ENCODE measurements at regions of chr17 and their contacts with region 1.

Region 1: GRCh38 chr17:75205037-75205792 is at the start of gene NUP85:
- DNase-seq: peak; percentile 99 to 100
- ATAC-seq: peak; percentile 92 to 94
- H3K4me3 ChIP-seq: peak within 1 kb of the TSS; percentile 87
- H3K27ac ChIP-seq: peak within 1 kb of the TSS; percentile 94 to 96
- H3K4me1 ChIP-seq: peaks cover 19% of the 10 kb centered on the region; the same call in 2 of the 3 replicates
- CTCF ChIP-seq: no peak
- EP300 ChIP-seq: no peak; a peak in 1 of 5 replicates
- POLR2A ChIP-seq: peak; percentile 96
- RAD21 ChIP-seq: no peak
- polyA plus RNA-seq, gene NUP85: 110 and 124 TPM in 2 replicates

Region 2: GRCh38 chr17:74923533-74924249 is 281.5 kb before region 1 on chr17:
- CTCF ChIA-PET with region 1: interaction called, 13 read pairs
- POLR2A ChIA-PET with region 1: no interaction called
- DNase-seq: peak; percentile 64 to 92
- ATAC-seq: peak; percentile 49 to 80
- H3K4me3 ChIP-seq: peak overlapping the region; percentile 46
- H3K27ac ChIP-seq: peak overlapping the region; percentile 42 to 70; a peak in 5 of 6 replicates
- H3K4me1 ChIP-seq: peaks cover 19% of the 10 kb centered on the region; the same call in 2 of the 3 replicates
- CTCF ChIP-seq: peak; percentile 98
- EP300 ChIP-seq: no peak
- POLR2A ChIP-seq: no peak
- RAD21 ChIP-seq: peak; percentile 88 to 97

Region 3: DNA sequence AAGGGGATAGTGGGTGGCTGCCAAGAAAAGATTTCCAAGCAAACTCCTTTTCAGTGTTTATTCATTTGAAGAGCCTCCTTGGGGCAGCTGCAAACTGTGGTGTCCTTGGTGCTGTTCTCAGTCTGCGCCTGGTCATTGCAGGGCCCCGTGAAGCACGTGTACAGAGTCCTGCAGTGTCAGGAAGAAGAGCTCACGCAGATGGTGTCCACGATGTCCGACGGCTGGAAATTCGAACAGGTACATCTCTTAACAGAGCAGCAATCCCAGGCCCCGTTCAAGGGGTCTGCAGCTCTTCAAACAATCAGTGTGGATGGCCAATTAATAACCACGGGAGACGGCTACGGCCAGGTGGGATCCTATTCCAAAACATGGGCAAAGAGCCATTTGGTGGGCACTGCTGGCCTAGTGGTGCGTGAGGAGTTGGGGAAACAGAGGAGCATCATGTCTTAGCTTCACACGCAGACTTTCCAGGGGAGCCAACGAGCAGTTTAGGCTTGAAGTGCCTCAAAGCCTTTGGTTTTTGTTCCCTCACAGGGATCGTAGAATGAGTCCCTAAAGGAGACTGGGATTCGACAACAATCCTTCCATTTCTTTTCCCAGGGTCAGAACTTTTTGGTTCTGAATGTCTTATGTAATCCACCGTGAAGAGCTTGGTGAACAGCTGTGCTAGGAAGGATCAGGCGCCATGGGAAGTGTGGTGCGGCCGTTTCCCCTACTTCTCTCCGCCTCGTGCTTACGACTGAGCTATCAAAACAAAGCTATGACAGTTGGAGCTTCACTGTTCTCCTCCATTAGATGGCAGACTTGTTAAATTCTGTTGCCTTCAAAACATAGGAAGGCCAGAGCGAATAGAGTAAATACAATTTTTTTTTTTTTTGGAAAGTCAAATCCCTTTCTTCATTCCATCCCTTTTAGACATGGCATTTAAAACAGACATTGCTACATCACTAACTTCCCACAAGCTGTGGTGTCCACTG is 145.6 kb before region 1 on chr17:
- CTCF ChIA-PET with region 1: interaction called, 59 read pairs
- POLR2A ChIA-PET with region 1: interaction called, 4 read pairs
- DNase-seq: peak in 1 of 2 experiments; percentile 70
- ATAC-seq: peak; percentile 77 to 85
- H3K4me3 ChIP-seq: no peak overlapping the region
- H3K27ac ChIP-seq: no peak overlapping the region
- H3K4me1 ChIP-seq: no peaks in the 10 kb centered on the region
- CTCF ChIP-seq: peak; percentile 62
- EP300 ChIP-seq: no peak
- POLR2A ChIP-seq: no peak
- RAD21 ChIP-seq: peak; percentile 62 to 71

Region 4: GRCh38 chr17:75077496-75078283 is 127.5 kb before region 1 on chr17:
- CTCF ChIA-PET with region 1: interaction called, 34 read pairs
- POLR2A ChIA-PET with region 1: no interaction called
- DNase-seq: no peak
- ATAC-seq: no peak
- H3K4me3 ChIP-seq: no peak overlapping the region
- H3K27ac ChIP-seq: peak overlapping the region; percentile 78 to 86
- H3K4me1 ChIP-seq: peaks cover 40% of the 10 kb centered on the region
- CTCF ChIP-seq: no peak
- EP300 ChIP-seq: no peak
- POLR2A ChIP-seq: no peak
- RAD21 ChIP-seq: no peak

Region 5: GRCh38 chr17:75131280-75132017 is 73.8 kb before region 1 on chr17 and contains the start of gene NT5C:
- CTCF ChIA-PET with region 1: interaction called, 543 read pairs
- POLR2A ChIA-PET with region 1: interaction called, 4 read pairs
- DNase-seq: peak; percentile 85 to 91
- ATAC-seq: peak; percentile 83 to 86
- H3K4me3 ChIP-seq: peak within 1 kb of the TSS; percentile 89
- H3K27ac ChIP-seq: peak within 1 kb of the TSS; percentile 97
- H3K4me1 ChIP-seq: peaks cover 40% of the 10 kb centered on the region
- CTCF ChIP-seq: peak; percentile 95
- EP300 ChIP-seq: no peak
- POLR2A ChIP-seq: peak; percentile 72
- RAD21 ChIP-seq: peak; percentile 58 to 77
- polyA plus RNA-seq, gene NT5C: 54.5 and 73.7 TPM in 2 replicates

Region 6: GRCh38 chr17:75144816-75145512 is 60.3 kb before region 1 on chr17:
- CTCF ChIA-PET with region 1: interaction called, 11 read pairs
- POLR2A ChIA-PET with region 1: no interaction called
- DNase-seq: no peak
- ATAC-seq: no peak
- H3K4me3 ChIP-seq: no peak overlapping the region
- H3K27ac ChIP-seq: no peak overlapping the region
- H3K4me1 ChIP-seq: peaks cover 25% of the 10 kb centered on the region
- CTCF ChIP-seq: no peak
- EP300 ChIP-seq: no peak
- POLR2A ChIP-seq: no peak
- RAD21 ChIP-seq: no peak

Region 7: GRCh38 chr17:75238684-75239191 is 33.5 kb after region 1 on chr17:
- CTCF ChIA-PET with region 1: interaction called, 98 read pairs
- POLR2A ChIA-PET with region 1: no interaction called
- DNase-seq: peak; percentile 89 to 96
- ATAC-seq: peak; percentile 71 to 84
- H3K4me3 ChIP-seq: no peak overlapping the region
- H3K27ac ChIP-seq: no peak overlapping the region
- H3K4me1 ChIP-seq: 0 out of 3 replicates have a peak, but pooled peaks cover 6% of the 10 kb centered on the region
- CTCF ChIP-seq: peak; percentile 92
- EP300 ChIP-seq: no peak
- POLR2A ChIP-seq: no peak
- RAD21 ChIP-seq: peak; percentile 57 to 64